Activated B cell treated with CpG ODN at 0.5 μM for 24 hours (primary cell): ENCODE measurements at regions of chr12 and their contacts with region 1.

Region 1: DNA sequence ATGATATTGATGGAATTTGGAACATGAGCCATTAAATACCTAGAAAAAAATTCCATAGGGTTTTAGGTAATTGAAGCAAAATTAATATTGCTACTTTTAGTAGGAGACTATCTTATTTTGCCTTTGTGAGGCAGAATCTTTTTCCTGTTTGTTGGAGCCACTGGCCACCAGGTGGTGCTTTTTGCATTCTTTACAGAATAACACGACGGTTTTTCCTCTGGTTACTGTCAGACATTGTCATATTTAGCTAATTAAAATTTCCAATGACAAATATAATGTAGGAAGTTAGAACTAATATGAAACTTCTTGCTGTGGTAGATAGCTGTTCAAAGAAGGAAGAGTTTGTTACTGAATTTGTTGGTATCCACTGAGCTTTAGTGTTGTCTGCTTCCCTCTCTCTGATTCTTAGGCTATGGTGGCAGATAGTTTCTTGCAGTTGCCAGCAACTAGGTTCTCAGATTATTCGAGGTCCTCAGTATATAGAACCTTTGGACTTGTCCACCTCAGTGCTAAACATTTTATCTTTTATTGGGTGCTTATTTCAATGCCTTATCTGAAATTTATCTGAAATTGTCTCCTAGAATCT is 25.7 kb downstream of the RAB21 start:
- DNase-seq: no peak
- ATAC-seq: peak; percentile 47
- H3K4me3 Mint-ChIP-seq: no peak overlapping the region
- H3K27ac Mint-ChIP-seq: peak overlapping the region; percentile 72
- H3K4me1 Mint-ChIP-seq: peaks cover 19% of the 10 kb centered on the region
- H3K27me3 Mint-ChIP-seq: no peaks in the 10 kb centered on the region
- CTCF ChIP-seq: no peak

Region 2: GRCh38 chr12:71763677-71764379 is 16.5 kb before region 1 on chr12:
- CTCF ChIA-PET with region 1: interaction called, 10 read pairs
- POLR2A ChIA-PET with region 1: no interaction called
- intact Hi-C with region 1: loop called (anchors 2 kb)
- DNase-seq: no peak
- ATAC-seq: no peak
- H3K4me3 Mint-ChIP-seq: no peak overlapping the region
- H3K27ac Mint-ChIP-seq: no peak overlapping the region
- H3K4me1 Mint-ChIP-seq: peaks cover 65% of the 10 kb centered on the region
- H3K27me3 Mint-ChIP-seq: no peaks in the 10 kb centered on the region
- CTCF ChIP-seq: no peak

Region 3: GRCh38 chr12:71840231-71840847 is 60.0 kb after region 1 on chr12:
- CTCF ChIA-PET with region 1: interaction called, 47 read pairs
- POLR2A ChIA-PET with region 1: no interaction called
- intact Hi-C with region 1: loop called (anchors 1 kb)
- DNase-seq: no peak
- ATAC-seq: peak; percentile 8
- H3K4me3 Mint-ChIP-seq: peak overlapping the region; percentile 94
- H3K27ac Mint-ChIP-seq: peak overlapping the region; percentile 96
- H3K4me1 Mint-ChIP-seq: peaks cover 34% of the 10 kb centered on the region
- H3K27me3 Mint-ChIP-seq: peaks cover 2% of the 10 kb centered on the region
- CTCF ChIP-seq: no peak

Region 4: DNA sequence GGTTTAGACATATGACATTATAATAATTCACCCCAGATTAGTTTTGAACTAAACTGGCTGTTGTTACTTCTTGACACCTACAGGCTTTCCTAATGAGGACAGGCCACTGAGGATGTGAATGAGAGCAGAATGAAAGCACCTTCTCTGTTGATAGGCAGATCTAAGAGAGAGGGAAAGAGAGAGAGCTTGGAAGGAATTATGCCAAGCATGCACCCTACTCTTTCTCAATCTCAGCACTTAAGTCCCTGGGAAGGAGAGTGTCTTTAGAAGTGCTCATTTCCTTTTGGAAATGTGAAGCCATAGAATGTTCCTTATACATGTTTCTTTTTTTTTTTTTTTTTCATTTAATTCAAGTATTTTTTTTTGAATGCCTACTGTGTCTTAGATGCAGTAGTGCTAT is 108.2 kb after region 1 on chr12:
- CTCF ChIA-PET with region 1: no interaction called
- POLR2A ChIA-PET with region 1: no interaction called
- intact Hi-C with region 1: no loop called
- DNase-seq: no peak
- ATAC-seq: no peak
- H3K4me3 Mint-ChIP-seq: no peak overlapping the region
- H3K27ac Mint-ChIP-seq: no peak overlapping the region
- H3K4me1 Mint-ChIP-seq: peaks cover 6% of the 10 kb centered on the region
- H3K27me3 Mint-ChIP-seq: no peaks in the 10 kb centered on the region
- CTCF ChIP-seq: no peak

Region 5: GRCh38 chr12:71938728-71939385 is 158.5 kb after region 1 on chr12 and contains the start of gene TPH2:
- CTCF ChIA-PET with region 1: interaction called, 3 read pairs
- POLR2A ChIA-PET with region 1: no interaction called
- intact Hi-C with region 1: loop called (anchors 5 kb)
- DNase-seq: peak; percentile 16
- ATAC-seq: peak; percentile 61
- H3K4me3 Mint-ChIP-seq: no peak within 1 kb of the TSS
- H3K27ac Mint-ChIP-seq: no peak within 1 kb of the TSS
- H3K4me1 Mint-ChIP-seq: no peaks in the 10 kb centered on the region
- H3K27me3 Mint-ChIP-seq: peaks cover 32% of the 10 kb centered on the region
- CTCF ChIP-seq: no peak
- total RNA-seq, gene TPH2: not detected in 2 replicates